Activated B cell treated with CpG ODN at 0.5 μM for 24 hours (primary cell): ENCODE measurements at regions of chr11 and their contacts with region 1.

Region 1: GRCh38 chr11:107565219-107565937 is at the start of gene ALKBH8:
- DNase-seq: peak; percentile 66
- ATAC-seq: peak; percentile 88
- H3K4me3 Mint-ChIP-seq: peak within 1 kb of the TSS; percentile 96
- H3K27ac Mint-ChIP-seq: peak within 1 kb of the TSS; percentile 97
- H3K4me1 Mint-ChIP-seq: peaks cover 56% of the 10 kb centered on the region
- H3K27me3 Mint-ChIP-seq: no peaks in the 10 kb centered on the region
- CTCF ChIP-seq: no peak
- total RNA-seq, gene ALKBH8: 11.8 and 12.4 TPM in 2 replicates

Region 2: DNA sequence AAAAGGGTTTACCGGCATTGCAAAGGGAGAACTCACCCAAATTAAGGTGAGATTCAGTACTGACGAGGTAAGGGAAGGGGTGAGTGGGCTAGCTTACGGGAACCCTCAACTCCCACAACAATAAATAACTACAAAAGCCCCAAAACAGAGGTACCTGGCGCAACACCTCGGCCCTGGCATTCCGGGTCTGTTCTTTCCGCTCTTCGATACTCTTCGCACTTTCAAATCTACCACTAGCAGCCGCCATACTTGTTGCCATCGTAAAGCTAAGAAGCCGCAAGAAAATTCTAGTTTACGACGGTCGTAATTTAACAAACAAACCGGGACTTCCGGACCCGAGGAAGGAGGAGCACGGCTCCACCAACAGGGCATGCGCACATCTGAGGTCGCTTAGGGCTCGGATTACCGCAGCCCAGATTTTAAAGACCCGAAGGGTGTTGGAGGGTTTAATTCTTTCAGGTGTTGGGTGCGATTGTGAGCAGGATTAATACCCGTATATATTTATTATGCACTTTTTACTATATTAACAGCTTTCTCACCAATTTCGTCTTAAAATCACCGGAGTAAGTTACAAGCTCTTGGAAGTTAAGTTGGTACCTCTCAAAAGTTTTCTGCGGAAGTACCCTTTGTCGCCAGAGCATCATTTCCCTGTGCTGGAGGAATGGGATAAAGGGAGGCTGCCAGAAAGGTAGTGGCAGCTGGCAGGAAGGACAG is 107.7 kb before region 1 on chr11 and contains the start of gene CWF19L2:
- CTCF ChIA-PET with region 1: no interaction called
- POLR2A ChIA-PET with region 1: interaction called, 3 read pairs
- intact Hi-C with region 1: loop called (anchors 1 kb)
- DNase-seq: peak; percentile 67
- ATAC-seq: peak; percentile 96
- H3K4me3 Mint-ChIP-seq: peak within 1 kb of the TSS; percentile 90
- H3K27ac Mint-ChIP-seq: peak within 1 kb of the TSS; percentile 93
- H3K4me1 Mint-ChIP-seq: peaks cover 25% of the 10 kb centered on the region
- H3K27me3 Mint-ChIP-seq: peaks cover 3% of the 10 kb centered on the region
- CTCF ChIP-seq: no peak
- total RNA-seq, gene CWF19L2: 24.5 and 26.1 TPM in 2 replicates

Region 3: DNA sequence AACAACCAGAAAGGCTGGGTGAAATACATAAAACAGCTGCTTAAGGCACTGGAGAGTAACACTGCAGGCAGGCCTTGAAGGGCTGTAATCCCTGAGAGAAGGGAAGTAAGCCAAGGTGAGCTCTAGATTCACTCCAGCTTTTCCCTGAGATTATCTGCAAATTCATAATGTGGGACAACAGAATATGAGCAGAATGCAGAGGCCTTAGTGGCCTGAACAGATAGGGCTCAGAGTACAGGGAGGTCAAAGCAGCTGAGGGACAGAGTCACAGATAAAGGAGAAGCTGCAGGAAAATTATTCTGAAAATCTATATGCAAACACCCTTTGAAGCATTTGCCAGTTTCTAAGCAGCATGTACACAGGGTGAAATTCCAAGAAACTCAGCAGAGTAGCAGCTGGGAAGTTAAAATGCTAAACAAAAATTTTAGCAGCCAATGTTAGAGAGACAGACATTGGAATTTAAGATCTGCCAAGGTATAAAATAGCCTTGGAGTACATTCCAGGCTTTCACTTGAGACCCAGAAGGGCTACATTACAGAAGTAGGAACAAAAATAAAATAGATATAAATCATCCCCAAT is 59.6 kb before region 1 on chr11:
- CTCF ChIA-PET with region 1: no interaction called
- POLR2A ChIA-PET with region 1: no interaction called
- intact Hi-C with region 1: no loop called
- DNase-seq: no peak
- ATAC-seq: no peak
- H3K4me3 Mint-ChIP-seq: no peak overlapping the region
- H3K27ac Mint-ChIP-seq: no peak overlapping the region
- H3K4me1 Mint-ChIP-seq: no peaks in the 10 kb centered on the region
- H3K27me3 Mint-ChIP-seq: no peaks in the 10 kb centered on the region
- CTCF ChIP-seq: no peak

Region 4: DNA sequence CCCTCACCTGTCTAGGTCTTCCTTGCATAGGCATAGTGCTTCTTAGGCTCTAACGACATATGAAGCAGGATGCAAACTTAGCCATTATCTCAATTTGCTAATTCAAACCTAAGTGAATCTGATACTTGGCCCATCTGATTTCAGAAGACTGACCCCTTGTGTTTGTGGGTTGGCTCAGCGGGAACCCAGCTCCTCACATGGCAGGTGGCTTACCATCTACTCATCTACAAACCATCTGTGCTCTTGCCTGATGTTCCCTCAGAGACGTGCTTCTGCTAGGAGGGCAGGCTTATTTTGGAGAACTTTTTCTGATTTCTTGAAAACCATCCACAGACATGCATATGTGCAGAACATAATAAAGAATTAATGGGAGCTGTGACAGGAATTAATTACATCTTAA is 40.8 kb after region 1 on chr11:
- CTCF ChIA-PET with region 1: no interaction called
- POLR2A ChIA-PET with region 1: no interaction called
- intact Hi-C with region 1: loop called (anchors 5 kb)
- DNase-seq: no peak
- ATAC-seq: no peak
- H3K4me3 Mint-ChIP-seq: no peak overlapping the region
- H3K27ac Mint-ChIP-seq: no peak overlapping the region
- H3K4me1 Mint-ChIP-seq: no peaks in the 10 kb centered on the region
- H3K27me3 Mint-ChIP-seq: peaks cover 35% of the 10 kb centered on the region
- CTCF ChIP-seq: no peak

Region 5: DNA sequence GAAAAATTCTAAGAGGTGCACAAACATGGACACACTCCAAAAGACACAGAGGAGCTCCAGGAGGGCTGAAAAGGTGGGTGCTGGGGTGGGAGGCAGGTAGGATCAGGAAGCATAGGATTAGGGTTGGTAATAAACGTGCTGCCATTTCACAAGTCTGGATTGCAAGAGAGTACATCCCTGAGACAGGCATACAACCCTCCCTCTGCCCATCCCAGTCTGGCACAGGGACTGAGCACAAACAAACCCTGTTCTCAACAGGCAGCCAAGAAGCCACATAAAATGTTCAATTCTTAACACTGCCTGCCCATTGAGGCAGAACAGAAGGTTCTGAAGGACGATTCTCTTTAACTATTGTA is 274.7 kb after region 1 on chr11:
- CTCF ChIA-PET with region 1: no interaction called
- POLR2A ChIA-PET with region 1: no interaction called
- intact Hi-C with region 1: loop called (anchors 1 kb)
- DNase-seq: no peak
- ATAC-seq: no peak
- H3K4me3 Mint-ChIP-seq: peak overlapping the region; percentile 29
- H3K27ac Mint-ChIP-seq: peak overlapping the region; percentile 90
- H3K4me1 Mint-ChIP-seq: peaks cover 35% of the 10 kb centered on the region
- H3K27me3 Mint-ChIP-seq: no peaks in the 10 kb centered on the region
- CTCF ChIP-seq: no peak

Region 6: DNA sequence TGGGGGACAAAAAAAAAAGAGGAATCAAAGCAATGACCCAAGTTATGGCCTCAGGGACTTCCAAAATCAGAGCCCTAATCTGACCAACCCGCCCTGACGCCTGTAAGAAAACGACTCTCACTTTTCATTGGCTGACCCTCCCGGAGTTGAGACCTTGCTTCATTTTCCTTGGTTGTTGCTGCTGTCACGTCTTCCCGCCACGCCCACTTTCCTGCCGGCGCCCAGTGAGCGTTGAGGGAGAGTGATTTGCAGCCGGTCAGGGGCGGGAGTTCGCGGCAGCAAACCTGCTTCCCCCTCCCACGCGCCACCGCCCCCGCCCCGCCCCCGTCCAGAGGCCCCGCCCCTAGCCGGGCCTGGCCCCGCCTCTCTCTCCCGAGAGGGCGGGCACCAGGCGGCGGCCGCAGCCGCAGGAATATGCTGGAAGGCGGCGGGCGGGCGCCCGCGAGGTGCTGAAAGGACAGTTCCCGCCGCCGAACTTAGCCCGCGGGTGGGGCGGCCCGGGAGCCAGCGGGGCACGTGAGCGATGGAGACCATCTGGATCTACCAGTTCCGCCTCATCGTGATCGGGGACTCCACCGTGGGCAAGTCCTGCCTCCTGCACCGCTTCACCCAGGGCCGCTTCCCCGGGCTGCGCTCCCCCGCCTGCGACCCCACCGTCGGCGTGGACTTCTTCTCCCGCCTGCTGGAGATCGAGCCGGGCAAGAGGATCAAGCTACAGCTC is 362.8 kb after region 1 on chr11 and contains the start of gene RAB39A:
- CTCF ChIA-PET with region 1: no interaction called
- POLR2A ChIA-PET with region 1: interaction called, 4 read pairs
- intact Hi-C with region 1: loop called (anchors 1 kb)
- DNase-seq: peak; percentile 82
- ATAC-seq: peak; percentile 87
- H3K4me3 Mint-ChIP-seq: peak within 1 kb of the TSS; percentile 91
- H3K27ac Mint-ChIP-seq: peak within 1 kb of the TSS; percentile 80
- H3K4me1 Mint-ChIP-seq: peaks cover 37% of the 10 kb centered on the region
- H3K27me3 Mint-ChIP-seq: peaks cover 4% of the 10 kb centered on the region
- CTCF ChIP-seq: no peak
- total RNA-seq, gene RAB39A: 3.6 and 4.1 TPM in 2 replicates

Region 7: GRCh38 chr11:108222686-108223448 is 657.5 kb after region 1 on chr11 and contains the start of gene ATM:
- CTCF ChIA-PET with region 1: no interaction called
- POLR2A ChIA-PET with region 1: no interaction called
- intact Hi-C with region 1: loop called (anchors 1 kb)
- DNase-seq: peak; percentile 94
- ATAC-seq: peak; percentile 82
- H3K4me3 Mint-ChIP-seq: no peak within 1 kb of the TSS
- H3K27ac Mint-ChIP-seq: no peak within 1 kb of the TSS
- H3K4me1 Mint-ChIP-seq: peaks cover 51% of the 10 kb centered on the region
- H3K27me3 Mint-ChIP-seq: no peaks in the 10 kb centered on the region
- CTCF ChIP-seq: no peak
- total RNA-seq, gene ATM: 164 and 184 TPM in 2 replicates